Gastrocnemius medialis (tissue), 4 donors: ENCODE measurements at regions of chr6 and their contacts with region 1.

Region 1: DNA sequence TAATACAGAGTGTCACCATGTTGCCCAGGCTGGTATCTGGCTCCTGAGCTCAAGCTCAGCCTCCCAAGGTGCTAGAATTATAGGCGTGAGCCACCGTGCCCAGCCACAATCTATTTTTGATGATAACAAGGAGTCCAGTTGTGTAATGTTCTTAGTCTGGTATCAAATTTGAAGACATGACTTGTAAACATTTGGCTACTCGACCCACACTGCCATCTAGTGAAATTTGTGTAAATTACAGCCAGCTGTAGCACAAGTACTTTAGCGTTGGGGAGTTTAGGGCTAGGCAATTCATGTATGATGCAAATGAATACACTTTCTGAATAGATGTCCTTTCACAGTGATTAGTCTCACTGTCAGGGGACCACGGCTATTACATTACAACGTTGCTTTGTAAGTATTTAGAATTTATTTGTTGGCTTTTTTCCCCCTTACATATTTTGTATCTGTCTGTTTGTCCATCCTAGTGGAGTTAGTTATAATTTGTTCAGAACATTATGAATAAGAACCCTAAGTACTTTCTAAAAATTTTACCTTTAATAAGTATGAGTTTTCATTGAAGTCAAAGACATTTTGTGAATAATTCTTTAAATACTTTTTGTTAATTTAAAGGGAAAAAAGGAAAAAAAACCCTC is 139.7 kb downstream of the PRDM13 start:
- DNase-seq: peak; percentile 80 to 82
- ATAC-seq: peak; percentile 100
- H3K4me3 ChIP-seq: no peak overlapping the region
- H3K27ac ChIP-seq: peak overlapping the region in 3 of 4 donors; percentile 64 to 70 (median 69)
- H3K4me1 ChIP-seq: peaks cover 6 to 7% of the 10 kb centered on the region in 2 donors
- H3K27me3 ChIP-seq: no peaks in the 10 kb centered on the region
- CTCF ChIP-seq: peak; percentile 86 to 93 (median 91)
- POLR2A ChIP-seq: no peak

Region 2: GRCh38 chr6:99467509-99468106 is 278.8 kb before region 1 on chr6:
- in situ Hi-C with region 1: loop called (anchors 5 to 10 kb)
- intact Hi-C with region 1: loop called (anchors 1 kb)
- DNase-seq: no peak
- ATAC-seq: peak in 1 of 2 donors; percentile 44
- H3K4me3 ChIP-seq: no peak overlapping the region
- H3K27ac ChIP-seq: no peak overlapping the region
- H3K4me1 ChIP-seq: no peaks in the 10 kb centered on the region
- H3K27me3 ChIP-seq: no peaks in the 10 kb centered on the region
- CTCF ChIP-seq: peak in 4 of 5 experiments; percentile 33 to 63 (median 54)
- POLR2A ChIP-seq: no peak

Region 3: GRCh38 chr6:99490608-99491007 is 255.8 kb before region 1 on chr6:
- in situ Hi-C with region 1: no loop called
- intact Hi-C with region 1: no loop called
- DNase-seq: no peak
- ATAC-seq: no peak
- H3K4me3 ChIP-seq: no peak overlapping the region
- H3K27ac ChIP-seq: no peak overlapping the region
- H3K4me1 ChIP-seq: no peaks in the 10 kb centered on the region
- H3K27me3 ChIP-seq: no peaks in the 10 kb centered on the region
- CTCF ChIP-seq: no peak
- POLR2A ChIP-seq: no peak

Region 4: DNA sequence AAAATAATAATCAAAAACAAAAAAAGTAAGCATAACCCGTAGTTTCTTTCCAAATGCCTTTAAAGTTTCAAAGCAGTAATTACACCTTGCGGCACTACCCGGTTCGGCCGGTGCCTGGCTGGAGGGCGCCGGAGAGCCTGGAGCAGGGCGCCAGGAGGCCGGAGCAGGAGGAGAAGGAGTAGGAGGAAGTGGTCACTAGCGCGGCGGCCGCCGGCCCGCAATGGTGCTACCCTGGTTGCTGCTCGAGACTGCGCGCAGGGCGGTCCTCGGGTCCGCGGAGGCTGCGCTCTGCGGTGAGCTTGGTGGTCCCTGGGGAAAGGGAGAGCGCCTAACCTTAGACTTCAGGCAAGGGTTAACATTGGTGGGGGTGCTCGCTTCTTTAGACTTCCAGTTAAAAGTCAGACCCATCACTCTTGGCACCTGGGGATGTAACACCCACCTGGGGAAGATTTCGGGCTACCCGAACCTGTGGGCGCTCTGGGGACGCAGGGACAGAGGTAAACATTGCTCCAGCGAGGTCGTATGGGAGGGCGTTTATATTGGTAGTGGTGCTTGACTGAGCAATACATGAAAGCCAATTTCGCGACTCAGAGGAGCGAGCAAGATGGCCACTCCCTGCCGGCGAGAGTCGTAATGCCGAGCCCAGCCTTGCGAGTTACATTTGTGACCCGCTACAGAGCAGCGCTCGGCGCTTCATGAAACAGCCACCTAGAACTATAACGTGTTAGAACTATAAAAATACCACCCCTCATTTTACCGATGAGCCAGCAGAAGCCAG is 225.3 kb before region 1 on chr6:
- in situ Hi-C with region 1: no loop called
- intact Hi-C with region 1: loop called (anchors 1 kb)
- DNase-seq: peak; percentile 76 to 80
- ATAC-seq: peak; percentile 91 to 94
- H3K4me3 ChIP-seq: peak overlapping the region; percentile 78 to 93 (median 90)
- H3K27ac ChIP-seq: peak overlapping the region; percentile 88 to 93 (median 90)
- H3K4me1 ChIP-seq: peaks cover 7 to 13% of the 10 kb centered on the region in 2 donors
- H3K27me3 ChIP-seq: no peaks in the 10 kb centered on the region
- CTCF ChIP-seq: peak; percentile 82 to 97 (median 91)
- POLR2A ChIP-seq: peak; percentile 87 to 88

Region 5: DNA sequence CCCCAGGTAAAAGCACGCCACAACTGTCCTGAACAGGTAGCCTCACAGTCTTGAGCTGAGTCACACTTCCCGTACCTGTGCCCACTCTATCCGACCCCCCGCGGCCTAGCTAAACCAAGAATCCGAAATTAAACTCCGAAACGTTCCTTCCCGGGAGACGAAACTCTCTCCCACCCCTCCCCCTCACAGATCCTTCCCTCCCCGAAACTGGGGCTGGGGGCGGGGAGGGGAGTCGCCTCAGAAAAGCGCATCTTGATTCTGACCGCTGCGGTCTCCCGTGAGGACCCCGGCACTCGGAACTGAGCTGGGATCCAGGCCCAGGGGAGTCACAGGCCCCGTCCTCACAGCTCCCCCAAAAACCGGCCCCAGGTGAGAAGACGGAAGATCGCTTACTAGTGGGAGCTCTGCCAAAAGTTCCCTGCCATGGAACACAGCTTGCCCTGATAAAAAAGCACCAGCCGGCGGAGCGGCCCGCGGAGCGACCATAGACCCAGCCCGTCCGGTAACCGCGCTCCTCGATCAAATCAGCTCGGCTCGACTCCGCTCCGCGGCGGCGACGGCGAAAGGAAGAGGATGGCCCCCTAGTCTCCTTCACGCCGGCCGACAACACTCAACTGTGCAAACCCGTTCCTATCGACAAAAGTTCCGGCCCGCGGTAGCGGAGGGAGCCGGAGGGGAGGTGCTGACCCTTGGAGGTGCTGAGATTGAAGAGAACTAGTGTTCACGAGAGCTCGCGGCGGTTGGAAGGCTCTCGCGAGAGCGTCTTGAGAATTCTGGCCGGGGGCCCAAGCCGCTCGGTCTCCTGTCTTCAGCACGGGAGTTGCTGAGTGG is 178.1 kb before region 1 on chr6 and contains the start of gene CCNC:
- in situ Hi-C with region 1: no loop called
- intact Hi-C with region 1: loop called (anchors 5 kb)
- DNase-seq: peak; percentile 87 to 95
- ATAC-seq: peak; percentile 98 to 99
- H3K4me3 ChIP-seq: peak within 1 kb of the TSS; percentile 84 to 99 (median 93)
- H3K27ac ChIP-seq: peak within 1 kb of the TSS; percentile 83 to 91 (median 89)
- H3K4me1 ChIP-seq: peaks cover 19 to 31% of the 10 kb centered on the region in 2 donors
- H3K27me3 ChIP-seq: no peaks in the 10 kb centered on the region
- CTCF ChIP-seq: peak in 1 of 5 experiments; percentile 11
- POLR2A ChIP-seq: peak; percentile 74
- total RNA-seq, gene CCNC: 18.1 to 45.4 (median 25.8) TPM

Region 6: GRCh38 chr6:99588618-99589289 is 157.6 kb before region 1 on chr6:
- in situ Hi-C with region 1: loop called (anchors 10 to 25 kb)
- intact Hi-C with region 1: loop called (anchors 1 kb)
- DNase-seq: peak; percentile 64 to 69
- ATAC-seq: peak; percentile 92
- H3K4me3 ChIP-seq: peak overlapping the region; percentile 59 to 78 (median 65)
- H3K27ac ChIP-seq: peak overlapping the region in 1 of 4 donors; percentile 6
- H3K4me1 ChIP-seq: peaks cover 17 to 23% of the 10 kb centered on the region in 2 donors
- H3K27me3 ChIP-seq: peaks cover 63 to 69% (median 67%) of the 10 kb centered on the region in 3 donors
- CTCF ChIP-seq: peak; percentile 29 to 71 (median 56)
- POLR2A ChIP-seq: no peak

Region 7: DNA sequence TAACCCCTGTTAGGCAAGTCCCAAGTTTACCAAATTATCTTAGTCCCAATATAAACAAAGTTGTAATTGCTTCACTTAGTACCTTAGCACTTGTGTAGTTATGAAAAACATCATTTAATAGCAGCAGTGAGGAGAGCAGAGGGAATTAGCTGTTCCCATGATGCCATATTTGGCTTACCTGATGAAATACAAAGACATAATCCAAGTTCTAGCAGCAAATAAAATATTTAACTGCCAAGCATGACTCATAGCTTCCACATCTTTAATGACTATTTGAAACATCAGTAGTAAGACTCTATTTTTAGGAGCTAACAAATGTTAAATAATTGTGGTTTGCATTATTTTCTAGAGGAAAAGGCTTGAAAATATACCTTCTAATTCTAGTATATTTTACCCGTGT is 341.6 kb after region 1 on chr6:
- in situ Hi-C with region 1: loop called in 1 of 4 experiments (anchors 25 kb)
- intact Hi-C with region 1: loop called (anchors 10 kb)
- DNase-seq: no peak
- ATAC-seq: peak; percentile 91 to 93
- H3K4me3 ChIP-seq: no peak overlapping the region
- H3K27ac ChIP-seq: peak overlapping the region; percentile 73 to 89 (median 80)
- H3K4me1 ChIP-seq: peaks cover 36 to 46% of the 10 kb centered on the region in 2 donors
- H3K27me3 ChIP-seq: no peaks in the 10 kb centered on the region
- CTCF ChIP-seq: no peak
- POLR2A ChIP-seq: no peak

Region 8: GRCh38 chr6:100099189-100100074 is 353.1 kb after region 1 on chr6:
- in situ Hi-C with region 1: loop called in 1 of 4 experiments (anchors 25 kb)
- intact Hi-C with region 1: no loop called
- DNase-seq: no peak
- ATAC-seq: peak; percentile 66 to 75
- H3K4me3 ChIP-seq: no peak overlapping the region
- H3K27ac ChIP-seq: no peak overlapping the region
- H3K4me1 ChIP-seq: no peaks in the 10 kb centered on the region
- H3K27me3 ChIP-seq: no peaks in the 10 kb centered on the region
- CTCF ChIP-seq: peak; percentile 50 to 70 (median 55)
- POLR2A ChIP-seq: no peak

Region 9: DNA sequence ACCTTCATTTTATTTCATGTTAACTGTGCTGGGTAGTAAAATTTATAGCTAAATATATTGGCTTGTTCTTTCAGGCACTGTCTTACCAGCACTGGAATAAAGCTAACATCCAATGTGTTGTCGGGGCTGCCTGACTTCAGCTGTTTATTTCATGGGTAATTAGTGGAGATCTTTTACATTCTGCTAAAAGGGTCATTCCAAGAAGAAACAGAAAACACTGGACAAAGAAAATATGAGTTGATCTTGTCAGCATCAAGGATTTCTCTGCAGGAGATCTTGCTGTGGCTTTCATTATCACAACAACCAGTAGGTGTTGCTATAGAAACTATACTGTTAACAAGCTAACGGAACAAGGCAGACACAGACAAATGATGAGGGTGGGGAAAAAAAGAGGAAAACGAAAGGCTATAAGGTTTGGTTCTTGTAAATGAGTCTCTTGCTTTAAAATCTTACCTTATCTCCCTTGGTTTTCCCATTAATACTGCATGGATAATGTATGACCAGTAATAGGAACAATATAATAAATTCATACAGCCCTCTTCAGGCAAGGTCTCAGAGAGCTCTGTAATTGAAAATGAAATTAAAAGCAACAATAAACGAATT is 511.5 kb after region 1 on chr6:
- in situ Hi-C with region 1: no loop called
- intact Hi-C with region 1: no loop called
- DNase-seq: no peak
- ATAC-seq: no peak
- H3K4me3 ChIP-seq: no peak overlapping the region
- H3K27ac ChIP-seq: no peak overlapping the region
- H3K4me1 ChIP-seq: no peaks in the 10 kb centered on the region
- H3K27me3 ChIP-seq: no peaks in the 10 kb centered on the region
- CTCF ChIP-seq: no peak
- POLR2A ChIP-seq: no peak